B cell (primary cell): ENCODE measurements at regions of chr17 and their contacts with region 1.

Region 1: GRCh38 chr17:27038676-27039075 is 255.2 kb upstream of the WSB1 start:
- DNase-seq: peak; percentile 3
- ATAC-seq: no peak
- H3K4me3 ChIP-seq: no peak overlapping the region
- H3K4me3 Mint-ChIP-seq: no peak overlapping the region
- H3K27ac ChIP-seq: no peak overlapping the region
- H3K27ac Mint-ChIP-seq: no peak overlapping the region
- H3K4me1 ChIP-seq: peaks cover 10 to 12% of the 10 kb centered on the region in 2 donors
- H3K4me1 Mint-ChIP-seq: peaks cover 22% of the 10 kb centered on the region
- H3K27me3 ChIP-seq: no peaks in the 10 kb centered on the region
- H3K27me3 Mint-ChIP-seq: peaks cover 3% of the 10 kb centered on the region
- CTCF ChIP-seq: no peak

Region 2: GRCh38 chr17:27049104-27049784 is 10.6 kb after region 1 on chr17:
- CTCF ChIA-PET with region 1: no interaction called
- POLR2A ChIA-PET with region 1: no interaction called
- intact Hi-C with region 1: no loop called
- DNase-seq: no peak
- ATAC-seq: no peak
- H3K4me3 ChIP-seq: no peak overlapping the region
- H3K4me3 Mint-ChIP-seq: no peak overlapping the region
- H3K27ac ChIP-seq: no peak overlapping the region
- H3K27ac Mint-ChIP-seq: no peak overlapping the region
- H3K4me1 ChIP-seq: no peaks in the 10 kb centered on the region
- H3K4me1 Mint-ChIP-seq: no peaks in the 10 kb centered on the region
- H3K27me3 ChIP-seq: peaks cover 0 to 3% (median 1%) of the 10 kb centered on the region in 4 experiments
- H3K27me3 Mint-ChIP-seq: peaks cover 21% of the 10 kb centered on the region
- CTCF ChIP-seq: no peak

Region 3: DNA sequence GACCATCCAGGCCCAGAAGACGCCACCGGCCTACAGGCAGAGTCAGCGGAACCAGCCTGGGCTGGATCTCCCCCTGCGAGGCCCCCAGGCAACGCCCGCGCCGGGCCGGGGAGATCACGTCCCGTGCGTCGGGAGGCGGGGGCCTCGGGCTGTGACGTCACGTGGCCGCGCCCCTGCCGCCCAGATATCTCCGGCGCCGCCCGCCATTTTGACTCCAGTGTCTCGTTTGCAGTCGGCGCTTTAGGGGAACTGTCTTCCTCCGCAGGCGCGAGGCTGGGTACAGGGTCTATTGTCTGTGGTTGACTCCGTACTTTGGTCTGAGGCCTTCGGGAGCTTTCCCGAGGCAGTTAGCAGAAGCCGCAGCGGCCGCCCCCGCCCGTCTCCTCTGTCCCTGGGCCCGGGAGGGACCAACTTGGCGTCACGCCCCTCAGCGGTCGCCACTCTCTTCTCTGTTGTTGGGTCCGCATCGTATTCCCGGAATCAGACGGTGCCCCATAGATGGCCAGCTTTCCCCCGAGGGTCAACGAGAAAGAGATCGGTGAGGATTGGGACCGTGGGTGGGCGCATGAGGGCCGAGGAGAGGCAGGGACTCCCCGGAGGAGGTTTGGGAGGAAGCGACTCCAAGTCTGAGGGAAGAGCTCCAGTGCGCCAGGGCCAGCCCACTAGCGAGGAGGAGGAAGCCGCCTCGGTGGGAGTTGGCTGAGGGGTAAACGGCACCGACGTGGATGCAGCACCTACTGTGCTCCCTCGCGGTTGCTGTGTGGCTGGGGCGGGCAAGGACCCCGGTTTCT is 255.4 kb after region 1 on chr17 and contains the start of gene WSB1:
- CTCF ChIA-PET with region 1: no interaction called
- POLR2A ChIA-PET with region 1: no interaction called
- intact Hi-C with region 1: no loop called
- DNase-seq: peak; percentile 97
- ATAC-seq: peak; percentile 86
- H3K4me3 ChIP-seq: peak within 1 kb of the TSS; percentile 89 to 100 (median 96)
- H3K4me3 Mint-ChIP-seq: peak within 1 kb of the TSS; percentile 89
- H3K27ac ChIP-seq: peak within 1 kb of the TSS; percentile 99
- H3K27ac Mint-ChIP-seq: peak within 1 kb of the TSS; percentile 99
- H3K4me1 ChIP-seq: peaks cover 37 to 39% of the 10 kb centered on the region in 2 donors
- H3K4me1 Mint-ChIP-seq: peaks cover 45% of the 10 kb centered on the region
- H3K27me3 ChIP-seq: no peaks in the 10 kb centered on the region
- H3K27me3 Mint-ChIP-seq: no peaks in the 10 kb centered on the region
- CTCF ChIP-seq: no peak
- total RNA-seq, gene WSB1: 215 and 217 TPM in 2 replicates

Region 4: DNA sequence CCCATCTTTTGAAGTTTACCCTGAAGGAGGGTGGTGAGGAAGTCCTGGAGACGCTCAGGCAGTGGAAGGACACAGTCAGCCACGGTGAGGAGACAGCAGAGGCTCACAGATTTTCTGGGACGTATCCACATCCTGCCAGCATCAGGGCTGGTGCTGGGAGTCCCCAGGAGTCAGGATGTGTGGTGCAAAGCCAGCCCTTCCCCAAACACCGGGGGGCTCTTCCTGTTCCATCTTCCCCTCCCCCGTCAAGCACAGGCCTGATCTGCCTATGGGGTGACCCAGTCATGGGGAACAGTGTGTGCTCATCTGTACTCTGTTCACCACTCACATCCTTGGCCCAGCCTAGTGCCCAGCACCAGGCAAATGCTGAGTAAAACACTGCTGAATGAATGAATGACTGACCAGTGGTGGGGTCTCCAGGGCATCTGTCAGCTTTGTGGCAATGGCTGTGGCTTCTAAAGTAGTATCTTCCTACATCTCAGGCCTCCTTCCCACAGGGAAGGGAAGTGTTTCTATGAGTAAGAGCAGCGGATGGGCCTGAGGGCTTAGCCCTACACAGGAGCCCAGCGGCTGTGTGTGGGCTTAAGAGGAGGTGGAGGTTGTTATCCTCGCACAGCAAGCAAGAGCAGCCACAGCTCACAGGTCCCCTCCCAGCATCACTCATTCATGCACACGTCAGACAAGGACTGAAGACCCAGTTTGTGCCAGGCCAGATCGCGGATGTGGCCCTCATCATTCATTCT is 738.4 kb after region 1 on chr17:
- CTCF ChIA-PET with region 1: no interaction called
- POLR2A ChIA-PET with region 1: interaction called, 10 read pairs
- intact Hi-C with region 1: no loop called
- DNase-seq: no peak
- ATAC-seq: no peak
- H3K4me3 ChIP-seq: no peak overlapping the region
- H3K4me3 Mint-ChIP-seq: no peak overlapping the region
- H3K27ac ChIP-seq: no peak overlapping the region
- H3K27ac Mint-ChIP-seq: no peak overlapping the region
- H3K4me1 ChIP-seq: no peaks in the 10 kb centered on the region
- H3K4me1 Mint-ChIP-seq: no peaks in the 10 kb centered on the region
- H3K27me3 ChIP-seq: no peaks in the 10 kb centered on the region
- H3K27me3 Mint-ChIP-seq: peaks cover 3% of the 10 kb centered on the region
- CTCF ChIP-seq: no peak